ENCODE measurements at regions of chr3 and their contacts with region 1.

Region 1: GRCh38 chr3:63993653-63994079 is 29.6 kb downstream of the PSMD6 start:
- DNase-seq: peak; percentile 65
- H3K4me3 Mint-ChIP-seq: no peak overlapping the region
- H3K27ac Mint-ChIP-seq: peak overlapping the region; percentile 41
- H3K4me1 Mint-ChIP-seq: peaks cover 31% of the 10 kb centered on the region
- H3K27me3 Mint-ChIP-seq: no peaks in the 10 kb centered on the region

Region 2: GRCh38 chr3:63349583-63350521 is 643.8 kb before region 1 on chr3:
- CTCF ChIA-PET with region 1: no interaction called
- intact Hi-C with region 1: loop called (anchors 1 kb)
- DNase-seq: peak; percentile 64
- H3K4me3 Mint-ChIP-seq: no peak overlapping the region
- H3K27ac Mint-ChIP-seq: no peak overlapping the region
- H3K4me1 Mint-ChIP-seq: no peaks in the 10 kb centered on the region
- H3K27me3 Mint-ChIP-seq: peaks cover 32% of the 10 kb centered on the region

Region 3: DNA sequence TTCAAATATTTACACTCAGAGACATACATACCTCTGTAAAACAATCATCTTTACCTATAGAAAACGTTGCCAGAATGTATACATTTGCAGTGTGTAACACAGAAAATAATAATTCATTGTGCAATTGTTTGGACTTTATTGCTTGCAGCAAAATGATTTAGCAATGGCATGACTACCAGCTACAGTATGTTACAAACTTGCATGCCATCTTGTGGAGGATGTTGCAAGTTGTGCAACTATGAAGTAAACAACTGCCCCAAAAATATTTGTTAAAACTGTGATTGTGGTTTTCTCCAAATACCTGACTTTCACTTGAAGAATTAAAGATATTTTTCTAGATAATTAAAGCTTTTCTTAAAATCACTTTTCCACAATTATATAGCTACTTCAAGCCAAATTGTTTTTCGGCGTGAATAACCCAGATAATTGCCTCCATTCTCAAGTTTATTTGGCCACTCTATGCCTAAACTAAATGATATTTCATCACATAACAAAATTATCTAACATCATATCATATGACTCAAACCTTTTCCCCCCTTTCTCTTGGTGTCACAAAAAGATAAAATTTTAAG is 201.6 kb before region 1 on chr3:
- CTCF ChIA-PET with region 1: no interaction called
- intact Hi-C with region 1: no loop called
- DNase-seq: no peak
- H3K4me3 Mint-ChIP-seq: no peak overlapping the region
- H3K27ac Mint-ChIP-seq: no peak overlapping the region
- H3K4me1 Mint-ChIP-seq: no peaks in the 10 kb centered on the region
- H3K27me3 Mint-ChIP-seq: peaks cover 2% of the 10 kb centered on the region

Region 4: GRCh38 chr3:63961891-63962290 is 31.8 kb before region 1 on chr3:
- CTCF ChIA-PET with region 1: interaction called, 52 read pairs
- intact Hi-C with region 1: loop called (anchors 1 kb)
- DNase-seq: no peak
- H3K4me3 Mint-ChIP-seq: no peak overlapping the region
- H3K27ac Mint-ChIP-seq: no peak overlapping the region
- H3K4me1 Mint-ChIP-seq: peaks cover 43% of the 10 kb centered on the region
- H3K27me3 Mint-ChIP-seq: no peaks in the 10 kb centered on the region

Region 5: GRCh38 chr3:63975723-63976122 is 17.9 kb before region 1 on chr3:
- CTCF ChIA-PET with region 1: interaction called, 17 read pairs
- intact Hi-C with region 1: loop called (anchors 1 kb)
- DNase-seq: no peak
- H3K4me3 Mint-ChIP-seq: no peak overlapping the region
- H3K27ac Mint-ChIP-seq: peak overlapping the region; percentile 57
- H3K4me1 Mint-ChIP-seq: peaks cover 91% of the 10 kb centered on the region
- H3K27me3 Mint-ChIP-seq: no peaks in the 10 kb centered on the region

Region 6: DNA sequence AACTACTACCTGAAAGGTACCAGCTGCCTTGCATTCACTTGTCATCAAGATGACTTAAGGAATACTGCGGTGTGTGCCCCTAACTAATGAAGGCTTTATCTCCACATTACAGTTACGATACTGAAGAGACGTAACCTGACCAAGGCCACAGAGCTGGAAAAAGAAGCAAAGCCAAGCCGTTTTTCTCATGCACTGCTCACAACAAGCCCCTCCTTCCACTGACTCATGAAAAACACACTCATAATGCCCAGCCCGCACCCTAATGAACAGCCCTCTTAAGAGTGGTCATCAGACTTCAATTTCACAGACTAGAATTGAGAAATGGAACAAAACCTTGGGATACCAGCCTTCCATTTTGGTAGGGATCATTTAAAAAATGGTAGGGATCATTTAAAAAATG is 18.0 kb after region 1 on chr3:
- CTCF ChIA-PET with region 1: interaction called, 20 read pairs
- intact Hi-C with region 1: no loop called
- DNase-seq: no peak
- H3K4me3 Mint-ChIP-seq: no peak overlapping the region
- H3K27ac Mint-ChIP-seq: peak overlapping the region; percentile 14
- H3K4me1 Mint-ChIP-seq: peaks cover 38% of the 10 kb centered on the region
- H3K27me3 Mint-ChIP-seq: no peaks in the 10 kb centered on the region

Measured in activated naive CD4-positive, alpha-beta T cell treated with anti-CD3 and anti-CD28 coated beads for 36 hours (primary cell).